Right ventricle myocardium inferior (tissue), 1 donor: ENCODE measurements at regions of chr15 and their contacts with region 1.

Region 1: DNA sequence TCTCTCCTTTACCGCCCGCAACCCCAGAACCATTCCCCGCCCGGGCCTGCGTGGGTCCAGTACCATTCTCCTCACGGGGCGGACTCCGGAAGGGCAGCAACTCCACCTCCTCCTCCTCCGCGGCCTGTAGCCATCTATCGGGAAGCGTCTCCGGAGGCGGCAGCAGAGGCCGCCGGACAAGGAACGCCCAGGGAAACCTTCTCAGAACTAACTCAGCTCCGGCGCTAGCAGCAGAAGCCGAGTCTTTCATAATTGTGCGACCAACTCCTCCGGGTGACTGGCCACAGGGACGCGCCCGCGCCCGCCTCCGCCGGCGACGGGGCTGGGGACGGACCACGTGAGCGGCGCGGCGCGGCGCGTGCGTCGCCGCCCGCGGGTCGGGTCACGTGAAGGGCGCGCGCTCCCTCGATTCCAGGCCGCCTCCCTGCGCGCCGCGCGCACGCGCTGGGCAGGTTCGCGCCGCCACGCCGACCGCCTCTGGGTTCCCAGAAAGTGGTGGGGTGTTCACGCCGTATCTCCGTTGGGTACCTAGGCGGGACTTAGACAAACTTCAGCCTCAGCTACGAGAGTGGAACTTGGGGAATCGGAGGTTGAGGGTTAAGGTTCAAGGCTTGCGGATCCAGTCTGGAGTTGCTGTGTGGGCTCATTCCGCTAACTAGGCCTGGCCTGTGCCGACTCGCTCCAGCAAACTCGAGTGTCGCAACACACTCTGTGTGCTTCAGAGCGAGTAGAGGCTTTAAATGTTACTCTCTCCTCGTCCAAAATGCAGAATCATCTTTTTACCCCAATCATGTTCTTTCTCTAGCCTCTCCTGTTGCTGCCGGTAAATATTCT is at the start of gene TRPM7:
- DNase-seq: peak; percentile 95
- ATAC-seq: peak; percentile 96
- total RNA-seq, gene TRPM7: 28.5 TPM

Region 2: GRCh38 chr15:50496692-50497091 is 190.0 kb before region 1 on chr15:
- intact Hi-C with region 1: no loop called
- DNase-seq: no peak
- ATAC-seq: no peak

Region 3: GRCh38 chr15:50712018-50712417 is 25.3 kb after region 1 on chr15:
- intact Hi-C with region 1: loop called (anchors 1 kb)
- DNase-seq: no peak
- ATAC-seq: no peak